ENCODE measurements at regions of chr1 and their contacts with region 1.

Region 1: DNA sequence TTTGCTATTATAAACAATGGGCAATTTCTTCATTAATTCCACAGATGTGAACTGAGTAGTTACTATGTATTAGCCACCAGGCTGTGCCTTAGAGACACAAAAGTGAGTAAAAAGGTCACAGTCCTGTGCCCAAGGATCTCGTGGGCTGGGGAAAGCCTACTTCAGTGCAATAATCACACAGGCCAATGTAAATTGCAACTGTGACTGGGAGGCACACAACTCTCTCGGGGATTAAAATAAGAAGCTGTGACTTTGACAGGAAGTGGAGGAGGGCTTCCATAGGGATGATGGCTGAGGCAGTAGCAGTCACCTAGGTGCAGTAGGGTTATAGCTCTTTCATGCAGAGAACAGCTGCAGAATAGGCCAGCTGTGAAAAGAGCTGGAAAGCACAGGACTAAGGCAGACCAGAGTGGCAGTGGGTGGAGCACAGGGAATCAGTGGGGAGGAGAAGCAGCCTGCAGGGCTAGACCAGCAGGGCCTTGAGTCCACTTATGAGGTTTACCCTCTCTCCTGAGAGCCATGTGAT is 121.9 kb downstream of the MAB21L3 start:
- DNase-seq: peak; percentile 76 to 77
- H3K4me3 ChIP-seq: no peak overlapping the region
- H3K27ac ChIP-seq: peak overlapping the region; percentile 11 to 46 (median 38)
- H3K4me1 ChIP-seq: peaks cover 13 to 29% of the 10 kb centered on the region in 2 donors
- H3K27me3 ChIP-seq: no peaks in the 10 kb centered on the region
- CTCF ChIP-seq: peak in 5 of 6 experiments; percentile 27 to 93 (median 73)
- POLR2A ChIP-seq: no peak

Region 2: DNA sequence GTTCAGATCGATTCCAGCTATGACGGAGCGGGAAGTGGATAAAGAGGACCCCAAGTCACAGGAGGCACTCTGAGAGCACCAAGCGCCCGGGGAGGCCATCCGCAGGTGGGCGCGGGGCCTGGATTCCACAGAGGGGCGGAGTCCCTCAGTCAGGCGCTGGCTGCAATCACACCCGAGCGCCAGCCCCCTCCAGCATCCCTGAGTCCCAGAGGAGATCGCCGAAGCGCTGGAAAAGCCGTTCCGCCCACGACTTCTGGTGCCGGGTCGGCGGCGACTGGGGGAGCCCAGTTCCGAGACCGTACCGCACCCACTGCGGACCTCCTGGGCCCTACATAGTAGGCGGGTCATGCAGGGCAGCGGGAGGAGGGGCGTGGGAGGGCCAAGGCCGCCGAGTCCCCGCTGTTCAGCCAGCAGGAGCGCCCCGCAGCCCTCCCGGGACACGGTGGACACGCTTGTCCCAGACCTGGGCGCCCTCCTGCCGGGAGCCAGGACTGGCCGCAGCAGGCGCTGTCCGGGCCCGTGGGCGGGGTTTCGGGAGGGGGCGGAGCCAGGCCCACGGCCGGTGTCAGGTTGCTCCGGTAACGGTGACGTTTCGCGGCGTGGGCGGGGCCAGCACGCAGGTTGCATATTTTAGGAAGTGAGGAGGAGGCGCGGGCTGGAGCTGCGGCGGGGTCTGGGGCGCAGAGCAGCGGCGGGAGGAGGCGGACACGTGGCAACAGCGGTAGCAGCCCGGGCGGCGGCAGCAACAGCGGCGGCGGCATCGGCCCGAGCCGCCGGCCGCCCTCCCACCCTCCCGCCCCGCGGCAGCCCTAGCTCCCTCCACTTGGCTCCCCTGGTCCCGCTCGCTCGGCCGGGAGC is 139.8 kb after region 1 on chr1 and contains the start of gene ATP1A1:
- intact Hi-C with region 1: loop called (anchors 10 kb)
- DNase-seq: peak; percentile 98
- H3K4me3 ChIP-seq: peak within 1 kb of the TSS; percentile 56 to 97 (median 95)
- H3K27ac ChIP-seq: peak within 1 kb of the TSS; percentile 97 to 99 (median 98)
- H3K4me1 ChIP-seq: peaks cover 20% of the 10 kb centered on the region in 2 donors
- H3K27me3 ChIP-seq: no peaks in the 10 kb centered on the region
- CTCF ChIP-seq: peak in 1 of 6 experiments; percentile 24
- POLR2A ChIP-seq: peak; percentile 91 to 100
- total RNA-seq, gene ATP1A1: 770 to 1,450 (median 1,316) TPM

Region 3: DNA sequence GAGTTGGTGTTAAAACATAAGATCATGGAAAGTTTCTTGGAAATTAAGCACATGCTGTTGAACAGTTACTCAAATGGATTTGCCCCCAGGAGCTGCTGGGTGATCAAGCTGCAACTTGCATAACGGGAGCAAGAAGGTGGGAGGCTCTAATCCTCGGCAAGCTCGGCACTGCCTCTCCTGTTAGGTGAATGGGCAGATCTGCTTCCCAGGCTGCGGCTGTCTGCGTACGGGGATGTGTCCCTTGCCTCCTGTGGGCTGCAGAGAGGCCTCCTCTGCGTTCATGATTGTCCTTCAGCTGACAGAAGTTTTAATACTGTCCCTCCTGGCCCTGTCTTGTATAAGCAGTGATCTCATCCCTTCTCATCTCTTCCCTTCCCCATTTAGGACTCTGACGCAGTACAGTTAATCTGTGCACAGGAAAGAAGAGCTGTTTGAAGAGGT is 176.7 kb after region 1 on chr1:
- intact Hi-C with region 1: loop called (anchors 10 kb)
- DNase-seq: no peak
- H3K4me3 ChIP-seq: no peak overlapping the region
- H3K27ac ChIP-seq: no peak overlapping the region
- H3K4me1 ChIP-seq: no peaks in the 10 kb centered on the region
- H3K27me3 ChIP-seq: no peaks in the 10 kb centered on the region
- CTCF ChIP-seq: no peak
- POLR2A ChIP-seq: no peak

Measured in thyroid gland (tissue), 4 donors.